Adrenal gland (tissue), 19 donors: ENCODE measurements at regions of chr9 and their contacts with region 1.

Region 1: DNA sequence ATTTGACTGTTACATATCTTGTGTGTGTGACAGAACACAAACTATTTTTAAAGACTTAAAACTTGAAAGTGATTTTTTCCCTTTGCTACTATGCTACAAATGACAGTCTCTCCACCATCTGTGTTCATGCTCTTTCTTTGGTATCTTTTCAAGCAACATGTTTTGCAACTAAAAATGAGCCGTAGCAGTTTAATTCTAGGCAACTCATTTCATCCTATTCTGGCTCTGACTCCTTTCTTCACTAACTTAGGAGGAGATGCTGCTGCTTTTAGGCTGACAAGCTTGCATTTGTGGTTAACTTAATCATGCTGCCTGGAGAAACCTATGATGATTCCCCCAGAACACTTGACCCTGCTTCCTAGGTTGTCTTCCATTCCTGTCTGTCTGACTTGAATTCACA is 100.6 kb downstream of the HACD4 start:
- DNase-seq: no peak
- H3K4me3 ChIP-seq: no peak overlapping the region
- H3K27ac ChIP-seq: no peak overlapping the region
- H3K4me1 ChIP-seq: peaks cover 0 to 4% of the 10 kb centered on the region in 2 donors
- H3K27me3 ChIP-seq: no peaks in the 10 kb centered on the region
- CTCF ChIP-seq: no peak
- POLR2A ChIP-seq: no peak

Region 2: GRCh38 chr9:20884985-20885593 is 45.7 kb before region 1 on chr9:
- intact Hi-C with region 1: loop called in 1 of 2 experiments (anchors 10 kb)
- DNase-seq: peak; percentile 42 to 91 (median 68)
- H3K4me3 ChIP-seq: no peak overlapping the region
- H3K27ac ChIP-seq: no peak overlapping the region
- H3K4me1 ChIP-seq: no peaks in the 10 kb centered on the region
- H3K27me3 ChIP-seq: no peaks in the 10 kb centered on the region
- CTCF ChIP-seq: peak; percentile 31 to 76 (median 54)
- POLR2A ChIP-seq: no peak

Region 3: GRCh38 chr9:21031091-21031807 is 100.4 kb after region 1 on chr9 and contains the start of gene HACD4:
- intact Hi-C with region 1: no loop called
- DNase-seq: peak; percentile 59 to 75 (median 69)
- H3K4me3 ChIP-seq: peak within 1 kb of the TSS; percentile 36 to 71 (median 57)
- H3K27ac ChIP-seq: peak within 1 kb of the TSS in 4 of 5 donors; percentile 52 to 72 (median 64)
- H3K4me1 ChIP-seq: peaks cover 9 to 14% of the 10 kb centered on the region in 2 donors
- H3K27me3 ChIP-seq: no peaks in the 10 kb centered on the region
- CTCF ChIP-seq: peak in 2 of 6 experiments; percentile 15 to 20
- POLR2A ChIP-seq: no peak
- total RNA-seq, gene HACD4: 1.2 to 13.7 (median 4.7) TPM